A673 (cell line): ENCODE measurements at regions of chr10 and their contacts with region 1.

Region 1: DNA sequence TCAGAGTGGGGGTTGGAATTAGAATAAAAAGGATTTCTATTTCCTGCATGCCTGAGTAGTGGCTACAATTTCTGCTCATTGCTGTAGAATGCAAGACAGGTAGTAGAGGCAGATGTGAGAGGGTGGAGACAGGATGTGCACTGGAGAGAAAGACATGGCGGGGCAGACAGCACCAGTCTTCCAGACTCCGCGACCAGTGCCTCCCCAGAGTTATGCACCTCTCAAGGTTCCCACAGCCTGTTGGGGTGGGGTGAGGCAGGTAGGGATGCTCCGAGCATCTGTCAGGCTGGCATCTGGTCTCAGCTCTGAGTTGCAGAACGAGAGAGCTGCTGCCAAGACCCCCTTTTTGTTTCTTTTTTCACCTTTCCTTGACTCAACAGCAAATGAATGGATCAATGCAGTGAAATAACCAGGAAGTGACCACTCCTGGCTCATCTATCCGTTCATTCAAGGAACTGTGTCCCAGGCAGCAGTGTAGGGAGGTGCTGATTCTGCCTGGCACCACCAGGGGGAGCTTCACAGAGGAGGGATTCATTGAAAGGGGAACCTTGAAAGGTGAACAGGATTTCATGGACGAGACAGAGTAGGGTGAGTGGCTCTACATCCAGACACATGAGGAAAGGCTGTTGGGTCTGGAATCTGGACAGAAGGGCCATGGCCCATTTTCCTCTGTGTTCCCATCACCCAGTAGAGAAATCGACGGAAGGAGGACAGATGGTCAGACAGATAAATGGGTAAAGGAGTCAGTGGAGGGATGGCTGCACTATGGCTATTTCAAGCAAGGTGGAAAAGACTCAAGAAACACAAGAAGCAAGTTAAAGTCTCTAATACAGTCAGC is 17.2 kb upstream of the SLC18A3 start:
- DNase-seq: peak; percentile 76
- H3K4me3 ChIP-seq: no peak overlapping the region
- H3K27ac ChIP-seq: no peak overlapping the region
- H3K4me1 ChIP-seq: no peaks in the 10 kb centered on the region
- H3K27me3 ChIP-seq: no peaks in the 10 kb centered on the region
- CTCF ChIP-seq: peak; percentile 96

Region 2: DNA sequence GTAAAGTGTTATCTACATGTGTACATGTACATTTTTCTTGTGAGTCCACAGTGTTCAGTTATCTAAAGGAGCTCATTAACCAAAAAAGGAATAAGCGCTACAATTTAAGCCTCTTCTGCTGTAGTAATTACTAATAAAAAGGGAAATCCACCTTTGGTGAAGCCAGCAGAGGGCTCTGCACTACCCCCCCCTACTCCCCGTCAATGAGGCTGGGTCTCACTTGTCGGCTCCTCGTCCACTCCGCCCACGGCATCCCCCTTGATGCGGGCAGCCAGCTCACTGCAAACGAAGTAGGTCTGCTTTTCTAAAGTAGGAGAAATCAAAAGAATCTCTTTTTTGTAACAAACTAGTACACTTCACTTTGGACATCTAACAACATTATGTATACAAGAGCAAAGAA is 470.2 kb after region 1 on chr10:
- CTCF ChIA-PET with region 1: no interaction called
- POLR2A ChIA-PET with region 1: no interaction called
- intact Hi-C with region 1: loop called (anchors 10 kb)
- DNase-seq: no peak
- H3K4me3 ChIP-seq: no peak overlapping the region
- H3K27ac ChIP-seq: no peak overlapping the region
- H3K4me1 ChIP-seq: no peaks in the 10 kb centered on the region
- H3K27me3 ChIP-seq: peaks cover 3% of the 10 kb centered on the region
- CTCF ChIP-seq: no peak

Region 3: DNA sequence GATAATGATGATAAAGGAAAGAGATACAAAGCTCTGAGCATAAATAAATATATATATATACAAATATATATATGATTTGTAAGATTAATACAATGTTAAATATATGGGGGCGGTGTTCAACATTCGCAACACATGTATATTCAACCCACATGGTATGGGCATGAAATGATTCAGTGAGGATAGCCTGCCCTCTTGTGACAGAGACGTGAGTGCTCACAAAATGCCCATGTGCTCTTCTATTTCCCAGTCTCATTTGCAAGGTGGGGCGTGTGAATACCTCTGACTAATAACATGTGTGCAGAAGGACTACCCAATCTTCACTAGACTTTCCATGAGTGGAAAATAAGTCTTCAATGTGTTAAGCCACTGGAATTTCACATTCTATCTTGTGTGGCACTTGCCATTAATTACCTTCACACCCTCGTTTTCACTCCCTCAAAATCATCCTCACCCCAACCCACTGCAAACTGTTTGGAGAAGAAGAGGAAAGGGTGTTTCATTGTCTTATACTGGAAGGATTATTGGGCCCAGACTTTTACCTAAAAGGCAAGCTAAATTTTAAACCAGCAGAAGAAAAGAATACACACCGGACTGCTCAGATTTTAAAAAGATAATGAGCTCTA is 631.5 kb after region 1 on chr10:
- CTCF ChIA-PET with region 1: no interaction called
- POLR2A ChIA-PET with region 1: no interaction called
- intact Hi-C with region 1: loop called (anchors 2 kb)
- DNase-seq: peak; percentile 80
- H3K4me3 ChIP-seq: no peak overlapping the region
- H3K27ac ChIP-seq: no peak overlapping the region
- H3K4me1 ChIP-seq: no peaks in the 10 kb centered on the region
- H3K27me3 ChIP-seq: peaks cover 16% of the 10 kb centered on the region
- CTCF ChIP-seq: peak; percentile 78